ENCODE measurements at regions of chr11 and their contacts with region 1.

Region 1: DNA sequence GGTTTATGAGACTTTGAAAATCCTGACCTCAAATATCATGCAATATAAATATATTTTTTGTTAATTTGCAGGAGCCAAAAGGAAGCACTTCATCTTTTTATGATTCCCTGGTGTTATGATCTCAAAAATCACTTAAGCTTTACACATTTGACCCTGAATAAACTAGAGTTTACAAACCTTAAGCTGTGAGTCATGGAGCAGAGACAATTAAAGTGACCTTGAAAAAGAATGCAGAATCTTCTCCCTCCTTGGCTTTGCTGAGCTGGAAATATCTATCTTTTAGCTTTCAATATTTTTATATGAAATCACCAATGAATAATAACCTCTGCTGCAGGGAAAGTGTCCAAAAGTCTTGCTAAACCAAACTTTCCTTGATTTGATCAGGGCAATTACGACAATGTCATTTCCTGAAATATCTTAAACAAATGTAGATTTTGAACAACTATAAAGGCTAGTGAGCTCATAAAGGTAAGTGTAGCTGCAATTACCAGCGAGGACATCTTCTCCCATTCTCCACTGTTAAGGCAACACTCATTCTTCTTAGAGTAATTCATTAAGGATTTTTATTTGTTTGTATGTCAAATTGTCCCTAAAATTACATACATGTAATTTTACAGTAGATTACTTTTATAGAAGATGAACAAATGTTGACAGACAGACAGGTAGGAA is 747.0 kb upstream of the LUZP2 start:
- DNase-seq: no peak
- ATAC-seq: no peak
- H3K4me3 ChIP-seq: no peak overlapping the region
- H3K27ac ChIP-seq: no peak overlapping the region
- H3K4me1 ChIP-seq: no peaks in the 10 kb centered on the region
- H3K27me3 ChIP-seq: no peaks in the 10 kb centered on the region
- CTCF ChIP-seq: no peak

Region 2: DNA sequence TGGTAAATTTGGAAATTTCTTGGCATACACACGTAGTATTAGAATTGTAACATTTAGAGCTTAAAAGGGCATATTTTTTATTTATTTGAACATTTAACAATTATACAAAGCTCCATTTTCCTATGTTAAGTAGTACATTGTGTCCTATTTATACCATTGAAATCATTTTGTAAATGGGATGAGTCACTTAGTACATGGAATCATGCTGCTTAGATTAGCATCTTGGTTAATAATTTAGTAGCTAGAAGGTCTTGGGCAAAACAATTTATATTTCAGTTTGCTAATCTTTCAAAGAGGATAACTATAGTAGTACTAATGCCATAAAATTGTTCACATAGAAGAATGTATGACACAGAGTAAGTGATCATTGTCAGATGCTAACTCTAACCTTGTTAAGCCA is 296.8 kb after region 1 on chr11:
- CTCF ChIA-PET with region 1: no interaction called
- POLR2A ChIA-PET with region 1: interaction called, 20 read pairs
- in situ Hi-C with region 1: no loop called
- intact Hi-C with region 1: no loop called
- DNase-seq: no peak
- ATAC-seq: no peak
- H3K4me3 ChIP-seq: no peak overlapping the region
- H3K27ac ChIP-seq: no peak overlapping the region
- H3K4me1 ChIP-seq: no peaks in the 10 kb centered on the region
- H3K27me3 ChIP-seq: no peaks in the 10 kb centered on the region
- CTCF ChIP-seq: no peak